ENCODE measurements at regions of chr1 and their contacts with region 1.

Region 1: GRCh38 chr1:11784993-11785769 is 20.6 kb downstream of the MTHFR start:
- DNase-seq: peak; percentile 71 to 85 (median 81)
- H3K4me3 ChIP-seq: peak overlapping the region; percentile 22
- H3K27ac ChIP-seq: peak overlapping the region; percentile 50 to 98
- H3K4me1 ChIP-seq: peaks cover 26% of the 10 kb centered on the region
- H3K27me3 ChIP-seq: no peaks in the 10 kb centered on the region
- CTCF ChIP-seq: peak; percentile 50 to 89 (median 87)
- EP300 ChIP-seq: no peak
- POLR2A ChIP-seq: no peak

Region 2: DNA sequence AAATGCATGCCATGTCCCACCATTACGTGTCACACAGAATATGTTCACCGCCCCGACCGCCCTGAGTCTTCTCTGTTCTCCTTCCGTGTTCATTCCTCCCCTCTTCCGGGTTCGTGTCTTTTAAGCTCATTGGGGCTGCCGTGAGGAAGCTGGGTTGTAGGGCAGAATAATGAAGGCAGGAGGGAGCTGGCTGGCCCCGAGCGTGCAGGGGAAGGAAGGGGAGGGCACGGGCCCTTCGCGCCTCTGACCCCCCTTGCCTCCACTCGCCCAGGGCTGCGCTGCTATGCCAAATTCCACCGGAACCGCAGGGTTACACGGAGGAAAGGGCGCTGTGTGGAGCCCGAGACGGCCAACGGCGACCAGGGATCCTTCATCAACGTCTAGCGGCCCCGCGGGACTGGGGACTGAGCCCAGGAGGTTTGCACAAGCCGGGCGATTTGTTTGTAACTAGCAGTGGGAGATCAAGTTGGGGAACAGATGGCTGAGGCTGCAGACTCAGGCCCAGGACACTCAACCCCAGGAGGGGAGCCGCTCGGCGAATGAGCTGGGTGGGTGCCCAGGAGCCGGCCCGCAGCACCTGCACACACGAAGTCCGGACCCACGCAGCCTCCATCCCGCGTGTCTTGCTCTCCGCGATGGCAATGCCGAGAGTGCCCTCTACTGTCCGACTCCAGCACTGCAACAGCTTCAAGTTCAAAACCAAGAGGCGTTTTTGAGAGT is 65.7 kb before region 1 on chr1:
- intact Hi-C with region 1: no loop called
- DNase-seq: peak; percentile 78 to 90 (median 88)
- H3K4me3 ChIP-seq: peak overlapping the region; percentile 10
- H3K27ac ChIP-seq: no peak overlapping the region
- H3K4me1 ChIP-seq: no peaks in the 10 kb centered on the region
- H3K27me3 ChIP-seq: no peaks in the 10 kb centered on the region
- CTCF ChIP-seq: peak; percentile 78 to 88 (median 86)
- EP300 ChIP-seq: no peak
- POLR2A ChIP-seq: no peak

Region 3: GRCh38 chr1:11802973-11803885 is 18.0 kb after region 1 on chr1:
- intact Hi-C with region 1: loop called in 1 of 4 experiments (anchors 2 kb)
- DNase-seq: peak; percentile 96 to 98 (median 97)
- H3K4me3 ChIP-seq: peak overlapping the region; percentile 62
- H3K27ac ChIP-seq: peak overlapping the region; percentile 95 to 96
- H3K4me1 ChIP-seq: peaks cover 4% of the 10 kb centered on the region
- H3K27me3 ChIP-seq: no peaks in the 10 kb centered on the region
- CTCF ChIP-seq: no peak
- EP300 ChIP-seq: no peak
- POLR2A ChIP-seq: peak; percentile 76